Activated naive CD4-positive, alpha-beta T cell treated with anti-CD3 and anti-CD28 coated beads for 36 hours (primary cell): ENCODE measurements at regions of chr5 and their contacts with region 1.

Region 1: DNA sequence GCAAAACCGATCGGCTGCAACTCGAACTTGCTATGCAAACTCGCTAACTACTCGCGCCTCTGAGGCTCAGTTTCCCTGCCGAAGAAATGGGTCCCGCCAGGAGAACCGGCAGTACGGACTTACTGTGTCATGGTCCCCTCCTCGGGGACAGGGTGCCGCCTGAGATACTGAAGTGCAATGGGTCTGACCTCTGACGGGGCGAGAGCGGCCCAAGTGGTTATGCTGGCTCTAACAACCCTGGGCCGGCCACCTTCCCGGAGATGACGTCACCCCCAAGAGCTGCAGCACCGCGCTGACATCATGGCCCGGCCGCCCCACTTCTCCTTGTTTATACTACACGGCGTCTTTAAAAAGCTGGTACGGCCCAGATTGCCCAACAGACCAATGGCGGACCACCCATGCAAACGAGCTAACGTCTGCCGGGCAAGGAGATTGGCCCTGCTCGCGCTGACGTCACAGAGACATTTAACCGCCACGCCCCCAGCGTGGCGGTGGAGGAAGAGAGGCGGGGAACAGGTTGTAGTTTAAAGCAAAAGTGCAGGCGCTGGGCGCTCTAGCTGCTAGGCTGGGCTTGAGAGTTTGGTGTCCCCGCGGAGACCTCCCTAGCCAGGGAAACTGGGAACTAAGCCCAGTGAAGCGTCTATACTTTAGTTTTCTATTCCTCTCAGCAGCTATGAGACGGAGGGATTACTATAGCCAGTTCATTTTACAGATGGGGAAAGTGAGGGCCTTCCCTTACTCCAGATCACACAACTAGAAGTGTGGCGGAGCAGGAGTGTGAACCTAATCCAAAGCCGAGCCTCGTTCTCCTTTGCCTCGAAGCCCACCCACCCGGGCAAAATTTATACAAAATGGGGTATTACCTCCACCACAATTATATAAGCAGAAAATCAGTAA is 654 bp upstream of the RNF44 start:
- DNase-seq: peak; percentile 99
- H3K4me3 Mint-ChIP-seq: peak overlapping the region; percentile 87
- H3K27ac Mint-ChIP-seq: peak overlapping the region; percentile 93
- H3K4me1 Mint-ChIP-seq: peaks cover 67% of the 10 kb centered on the region
- H3K27me3 Mint-ChIP-seq: no peaks in the 10 kb centered on the region

Region 2: DNA sequence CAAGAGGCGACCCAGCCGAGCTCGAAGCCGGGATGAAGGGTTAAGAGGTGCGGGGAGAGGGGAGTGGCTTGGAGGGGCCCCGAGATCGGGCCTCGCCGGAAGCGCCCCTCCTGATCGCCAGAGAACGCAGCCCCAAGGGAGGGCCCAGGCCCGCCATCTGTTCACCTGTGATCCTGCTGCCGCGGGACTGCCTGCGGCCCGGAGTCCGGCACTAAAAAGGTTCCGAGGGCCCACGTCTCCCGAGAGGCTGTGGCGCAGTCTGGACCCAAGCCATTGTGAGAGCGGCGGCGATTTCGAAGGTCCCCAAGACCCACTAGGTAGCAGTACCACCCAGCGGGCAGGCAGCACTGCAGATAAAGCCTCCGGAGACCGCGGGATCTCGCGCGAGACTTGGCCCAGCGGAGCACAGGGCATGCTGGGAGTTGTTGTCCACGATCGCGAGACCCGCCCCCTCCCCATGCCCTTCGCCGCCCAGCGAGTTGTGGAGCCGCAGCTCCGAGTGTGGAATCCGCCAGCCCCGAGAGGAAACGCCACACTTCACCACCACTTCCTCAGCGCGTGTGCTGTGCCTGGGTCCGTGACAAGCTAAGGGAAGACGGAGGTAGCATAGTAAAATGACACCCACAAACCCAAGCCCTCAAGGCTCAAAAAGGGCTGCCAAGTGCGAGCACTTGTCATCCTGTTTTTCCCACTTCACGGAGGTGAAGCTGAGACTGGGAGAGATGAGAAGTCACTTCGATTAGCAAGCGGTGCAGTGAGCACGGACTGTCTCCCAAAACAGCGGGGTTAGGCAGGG is 176.2 kb before region 1 on chr5 and contains the start of gene KIAA1191:
- CTCF ChIA-PET with region 1: no interaction called
- intact Hi-C with region 1: loop called (anchors 2 kb)
- DNase-seq: peak; percentile 97
- H3K4me3 Mint-ChIP-seq: peak within 1 kb of the TSS; percentile 99
- H3K27ac Mint-ChIP-seq: peak within 1 kb of the TSS; percentile 91
- H3K4me1 Mint-ChIP-seq: peaks cover 31% of the 10 kb centered on the region
- H3K27me3 Mint-ChIP-seq: no peaks in the 10 kb centered on the region
- total RNA-seq, gene KIAA1191: 33.5 to 33.7 TPM

Region 3: GRCh38 chr5:176447982-176448608 is 89.8 kb before region 1 on chr5 and contains the start of gene FAF2:
- CTCF ChIA-PET with region 1: no interaction called
- intact Hi-C with region 1: loop called (anchors 1 kb)
- DNase-seq: peak; percentile 98
- H3K4me3 Mint-ChIP-seq: peak within 1 kb of the TSS; percentile 99
- H3K27ac Mint-ChIP-seq: peak within 1 kb of the TSS; percentile 97
- H3K4me1 Mint-ChIP-seq: peaks cover 37% of the 10 kb centered on the region
- H3K27me3 Mint-ChIP-seq: no peaks in the 10 kb centered on the region
- total RNA-seq, gene FAF2: 30.0 to 32.8 TPM

Region 4: GRCh38 chr5:176614805-176615478 is 77.1 kb after region 1 on chr5:
- CTCF ChIA-PET with region 1: no interaction called
- intact Hi-C with region 1: no loop called
- DNase-seq: no peak
- H3K4me3 Mint-ChIP-seq: no peak overlapping the region
- H3K27ac Mint-ChIP-seq: no peak overlapping the region
- H3K4me1 Mint-ChIP-seq: peaks cover 11% of the 10 kb centered on the region
- H3K27me3 Mint-ChIP-seq: peaks cover 52% of the 10 kb centered on the region

Region 5: GRCh38 chr5:177006265-177006972 is 468.6 kb after region 1 on chr5 and contains the start of gene UIMC1:
- CTCF ChIA-PET with region 1: no interaction called
- intact Hi-C with region 1: loop called (anchors 5 kb)
- DNase-seq: peak; percentile 90
- H3K4me3 Mint-ChIP-seq: peak within 1 kb of the TSS; percentile 93
- H3K27ac Mint-ChIP-seq: peak within 1 kb of the TSS; percentile 93
- H3K4me1 Mint-ChIP-seq: peaks cover 29% of the 10 kb centered on the region
- H3K27me3 Mint-ChIP-seq: no peaks in the 10 kb centered on the region
- total RNA-seq, gene UIMC1: 53.4 to 54.6 TPM

Region 6: GRCh38 chr5:177370488-177371119 is 832.7 kb after region 1 on chr5:
- CTCF ChIA-PET with region 1: interaction called, 3 read pairs
- intact Hi-C with region 1: loop called (anchors 5 kb)
- DNase-seq: peak; percentile 75
- H3K4me3 Mint-ChIP-seq: peak overlapping the region; percentile 74
- H3K27ac Mint-ChIP-seq: no peak overlapping the region
- H3K4me1 Mint-ChIP-seq: peaks cover 70% of the 10 kb centered on the region
- H3K27me3 Mint-ChIP-seq: no peaks in the 10 kb centered on the region